CD4-positive, alpha-beta memory T cell (primary cell): ENCODE measurements at regions of chr7 and their contacts with region 1.

Region 1: DNA sequence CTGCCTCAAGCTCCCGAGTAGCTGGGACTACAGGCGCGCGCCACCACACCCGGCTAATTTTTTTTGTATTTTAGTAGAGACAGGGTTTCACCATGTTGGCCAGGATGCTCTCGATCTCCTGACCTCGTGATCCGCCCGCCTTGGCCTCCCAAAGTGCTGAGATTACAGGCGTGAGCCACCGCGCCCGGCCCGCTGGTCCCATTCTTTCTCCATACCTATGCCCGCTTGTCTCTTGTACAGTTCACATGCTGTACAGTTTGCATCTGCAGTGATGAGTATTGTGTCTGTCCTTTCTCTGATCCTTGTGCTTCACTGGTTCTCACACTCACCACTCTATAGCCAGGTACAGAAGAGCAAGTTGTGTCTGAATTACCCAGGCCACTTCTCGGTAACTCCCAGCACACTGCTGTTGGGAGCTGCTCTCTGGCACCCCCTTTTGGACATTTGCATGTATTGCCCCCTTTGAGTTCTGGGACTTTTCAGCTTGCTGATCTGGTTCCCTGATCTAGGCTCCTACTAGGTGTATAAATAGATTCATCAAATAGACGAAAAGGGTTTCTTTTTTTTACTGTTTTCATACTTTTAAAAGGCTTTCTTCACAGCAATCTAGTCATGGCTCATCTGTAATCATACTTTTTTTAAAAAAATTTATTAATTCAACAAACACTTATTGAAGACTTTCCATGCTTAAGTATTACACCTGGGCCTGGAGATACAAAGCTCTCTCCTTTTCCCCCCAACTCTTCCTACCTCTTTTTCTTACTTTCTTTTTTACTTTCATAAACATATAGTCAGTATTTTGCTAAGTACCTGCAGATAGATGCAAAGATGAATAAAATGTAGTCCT is 53.5 kb downstream of the AOAH start:
- DNase-seq: peak; percentile 56 to 74 (median 73)
- H3K4me3 ChIP-seq: no peak overlapping the region
- H3K4me3 Mint-ChIP-seq: peak overlapping the region in 1 of 8 donors; percentile 50
- H3K27ac ChIP-seq: no peak overlapping the region
- H3K27ac Mint-ChIP-seq: peak overlapping the region in 4 of 7 donors; percentile 58 to 89 (median 78)
- H3K4me1 ChIP-seq: peaks cover 7% of the 10 kb centered on the region
- H3K4me1 Mint-ChIP-seq: peaks cover 4 to 8% (median 5%) of the 10 kb centered on the region in 4 donors
- H3K27me3 ChIP-seq: no peaks in the 10 kb centered on the region
- H3K27me3 Mint-ChIP-seq: peaks cover 2% of the 10 kb centered on the region in 2 donors

Region 2: DNA sequence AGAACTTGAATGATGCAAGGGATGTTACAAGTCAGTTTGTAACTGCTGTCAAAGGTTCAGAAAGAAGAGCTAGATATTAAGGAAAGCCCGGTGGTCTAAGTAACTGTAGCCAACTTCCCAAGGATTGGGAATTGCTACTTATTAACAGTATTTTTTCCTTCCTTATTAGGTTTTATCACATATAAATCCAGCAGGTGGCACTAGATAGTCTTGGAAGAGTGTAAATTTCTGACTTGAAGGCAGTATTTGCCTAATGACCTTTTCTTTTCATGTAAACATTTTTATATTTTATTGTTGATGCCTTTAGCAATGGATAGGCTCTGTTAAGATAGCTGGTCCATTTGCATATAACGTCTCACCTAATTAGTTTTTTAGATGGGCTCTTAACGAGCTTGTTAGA is 229.9 kb before region 1 on chr7:
- CTCF ChIA-PET with region 1: interaction called, 24 read pairs
- POLR2A ChIA-PET with region 1: no interaction called
- intact Hi-C with region 1: no loop called
- DNase-seq: peak in 4 of 5 donors; percentile 1 to 24 (median 6)
- H3K4me3 ChIP-seq: no peak overlapping the region
- H3K4me3 Mint-ChIP-seq: no peak overlapping the region
- H3K27ac ChIP-seq: no peak overlapping the region
- H3K27ac Mint-ChIP-seq: no peak overlapping the region
- H3K4me1 ChIP-seq: no peaks in the 10 kb centered on the region
- H3K4me1 Mint-ChIP-seq: no peaks in the 10 kb centered on the region
- H3K27me3 ChIP-seq: no peaks in the 10 kb centered on the region
- H3K27me3 Mint-ChIP-seq: no peaks in the 10 kb centered on the region

Region 3: GRCh38 chr7:36487756-36488336 is 183.0 kb before region 1 on chr7:
- CTCF ChIA-PET with region 1: interaction called, 214 read pairs
- POLR2A ChIA-PET with region 1: interaction called, 22 read pairs
- intact Hi-C with region 1: loop called (anchors 1 kb)
- DNase-seq: peak; percentile 43 to 61 (median 59)
- H3K4me3 ChIP-seq: no peak overlapping the region
- H3K4me3 Mint-ChIP-seq: no peak overlapping the region
- H3K27ac ChIP-seq: no peak overlapping the region
- H3K27ac Mint-ChIP-seq: no peak overlapping the region
- H3K4me1 ChIP-seq: no peaks in the 10 kb centered on the region
- H3K4me1 Mint-ChIP-seq: peaks cover 0 to 2% (median 0%) of the 10 kb centered on the region in 4 donors
- H3K27me3 ChIP-seq: no peaks in the 10 kb centered on the region
- H3K27me3 Mint-ChIP-seq: peaks cover 0 to 1% of the 10 kb centered on the region in 2 donors

Region 4: GRCh38 chr7:36639826-36640225 is 31.0 kb before region 1 on chr7:
- CTCF ChIA-PET with region 1: interaction called, 46 read pairs
- POLR2A ChIA-PET with region 1: interaction called, 3 read pairs
- intact Hi-C with region 1: loop called (anchors 5 kb)
- DNase-seq: peak; percentile 49 to 62 (median 55)
- H3K4me3 ChIP-seq: peak overlapping the region in 1 of 2 donors; percentile 0
- H3K4me3 Mint-ChIP-seq: peak overlapping the region; percentile 8 to 81 (median 72)
- H3K27ac ChIP-seq: peak overlapping the region; percentile 30
- H3K27ac Mint-ChIP-seq: peak overlapping the region; percentile 66 to 96 (median 88)
- H3K4me1 ChIP-seq: peaks cover 47% of the 10 kb centered on the region
- H3K4me1 Mint-ChIP-seq: peaks cover 46 to 76% (median 59%) of the 10 kb centered on the region in 4 donors
- H3K27me3 ChIP-seq: no peaks in the 10 kb centered on the region
- H3K27me3 Mint-ChIP-seq: no peaks in the 10 kb centered on the region

Region 5: GRCh38 chr7:36683695-36684357 is 13.0 kb after region 1 on chr7:
- CTCF ChIA-PET with region 1: interaction called, 22 read pairs
- POLR2A ChIA-PET with region 1: interaction called, 5 read pairs
- intact Hi-C with region 1: no loop called
- DNase-seq: no peak
- H3K4me3 ChIP-seq: no peak overlapping the region
- H3K4me3 Mint-ChIP-seq: no peak overlapping the region
- H3K27ac ChIP-seq: no peak overlapping the region
- H3K27ac Mint-ChIP-seq: peak overlapping the region in 1 of 7 donors; percentile 39
- H3K4me1 ChIP-seq: peaks cover 11% of the 10 kb centered on the region
- H3K4me1 Mint-ChIP-seq: peaks cover 15 to 26% (median 17%) of the 10 kb centered on the region in 4 donors
- H3K27me3 ChIP-seq: no peaks in the 10 kb centered on the region
- H3K27me3 Mint-ChIP-seq: no peaks in the 10 kb centered on the region

Region 6: DNA sequence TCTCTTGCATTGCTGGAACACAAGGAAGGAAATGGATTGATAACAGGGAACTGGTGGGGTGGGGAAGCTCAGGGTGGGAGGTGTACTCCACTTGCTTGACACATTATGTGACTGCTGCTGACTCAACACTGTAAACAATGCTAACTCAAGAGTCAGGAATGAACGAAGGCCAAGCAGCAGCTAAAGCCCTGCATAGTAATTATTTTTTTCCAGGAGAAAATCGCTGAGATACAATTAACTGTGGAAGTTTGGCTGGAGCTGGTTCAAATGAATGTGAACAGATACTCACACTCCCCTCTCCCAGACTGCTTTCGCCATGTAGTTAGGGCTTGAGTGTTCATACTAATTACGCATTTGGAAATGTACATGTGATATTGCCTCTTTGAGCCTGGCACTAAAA is 224.4 kb after region 1 on chr7:
- CTCF ChIA-PET with region 1: no interaction called
- POLR2A ChIA-PET with region 1: no interaction called
- intact Hi-C with region 1: no loop called
- DNase-seq: no peak
- H3K4me3 ChIP-seq: no peak overlapping the region
- H3K4me3 Mint-ChIP-seq: no peak overlapping the region
- H3K27ac ChIP-seq: no peak overlapping the region
- H3K27ac Mint-ChIP-seq: peak overlapping the region in 1 of 7 donors; percentile 34
- H3K4me1 ChIP-seq: no peaks in the 10 kb centered on the region
- H3K4me1 Mint-ChIP-seq: peaks cover 8 to 17% (median 14%) of the 10 kb centered on the region in 4 donors
- H3K27me3 ChIP-seq: no peaks in the 10 kb centered on the region
- H3K27me3 Mint-ChIP-seq: no peaks in the 10 kb centered on the region